Kidney (tissue), 22 donors: ENCODE measurements at regions of chr13 and their contacts with region 1.

Region 1: DNA sequence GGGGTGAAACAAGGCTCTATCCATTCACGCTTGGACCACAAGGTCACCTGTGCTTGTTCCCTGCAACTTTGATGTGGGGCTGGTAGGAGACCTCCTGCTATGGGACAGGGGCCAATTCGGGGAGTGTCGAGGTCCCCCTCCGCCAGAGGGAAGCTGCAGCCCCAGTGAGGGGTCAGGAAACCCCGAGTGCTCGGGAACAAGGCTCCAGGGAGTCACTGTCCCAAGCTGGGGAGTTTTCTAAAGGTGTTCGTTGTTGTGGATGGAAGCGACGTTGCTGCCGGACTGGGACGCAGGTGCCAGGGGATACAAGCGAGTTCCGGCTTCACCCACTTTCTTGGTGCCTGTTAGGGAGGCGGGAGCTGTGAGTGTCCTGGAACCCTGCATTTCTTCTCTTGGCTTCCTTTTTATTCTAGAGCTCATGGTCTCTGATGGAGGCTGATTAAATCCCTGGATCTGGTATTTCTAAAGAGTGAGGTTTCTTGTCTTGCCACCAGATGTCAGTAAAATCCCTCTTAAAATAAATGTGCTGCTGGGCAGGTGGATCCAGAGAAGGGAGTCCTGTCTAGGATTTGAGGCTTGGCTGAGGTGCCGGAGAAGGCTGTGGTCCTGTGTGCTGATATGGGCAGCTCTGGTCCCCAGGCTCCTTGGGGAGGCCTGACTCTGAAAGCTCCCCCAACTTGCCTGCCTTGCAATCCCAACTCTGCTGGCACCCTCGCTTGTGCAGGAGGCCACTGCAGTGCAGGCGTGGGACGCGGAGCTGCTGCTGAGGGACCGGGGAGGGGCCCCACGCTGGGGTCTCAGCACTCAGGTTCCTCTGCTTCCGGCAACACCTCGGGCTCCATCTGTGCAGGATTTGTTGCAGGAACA is 153.9 kb downstream of the TEX29 start:
- DNase-seq: peak in 4 of 5 donors; percentile 53 to 88 (median 72)
- H3K4me3 ChIP-seq: no peak overlapping the region
- H3K27ac ChIP-seq: no peak overlapping the region
- H3K4me1 ChIP-seq: no peaks in the 10 kb centered on the region
- H3K27me3 ChIP-seq: no peaks in the 10 kb centered on the region
- CTCF ChIP-seq: peak; percentile 47

Region 2: DNA sequence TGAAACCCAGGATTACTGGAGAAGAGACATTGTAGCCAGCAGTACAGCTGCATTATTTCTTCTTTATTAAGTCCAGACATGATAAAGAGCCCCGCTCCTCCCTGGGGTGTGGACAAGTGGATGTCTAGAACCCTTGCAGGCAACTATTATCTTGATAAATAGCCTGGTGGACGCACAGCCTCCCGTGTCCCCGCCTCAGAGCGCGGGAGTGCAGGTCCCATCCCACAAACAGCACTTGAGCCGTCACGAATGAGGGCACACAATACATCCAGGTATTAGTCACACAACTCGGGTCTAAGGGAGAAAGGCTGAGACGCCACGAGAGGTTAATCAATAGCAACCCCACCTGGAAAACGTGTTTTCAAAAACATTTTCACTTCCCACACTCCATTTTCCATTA is 379.4 kb after region 1 on chr13:
- intact Hi-C with region 1: no loop called
- DNase-seq: peak in 4 of 5 donors; percentile 77 to 84 (median 80)
- H3K4me3 ChIP-seq: no peak overlapping the region
- H3K27ac ChIP-seq: no peak overlapping the region
- H3K4me1 ChIP-seq: no peaks in the 10 kb centered on the region
- H3K27me3 ChIP-seq: no peaks in the 10 kb centered on the region
- CTCF ChIP-seq: no peak

Region 3: DNA sequence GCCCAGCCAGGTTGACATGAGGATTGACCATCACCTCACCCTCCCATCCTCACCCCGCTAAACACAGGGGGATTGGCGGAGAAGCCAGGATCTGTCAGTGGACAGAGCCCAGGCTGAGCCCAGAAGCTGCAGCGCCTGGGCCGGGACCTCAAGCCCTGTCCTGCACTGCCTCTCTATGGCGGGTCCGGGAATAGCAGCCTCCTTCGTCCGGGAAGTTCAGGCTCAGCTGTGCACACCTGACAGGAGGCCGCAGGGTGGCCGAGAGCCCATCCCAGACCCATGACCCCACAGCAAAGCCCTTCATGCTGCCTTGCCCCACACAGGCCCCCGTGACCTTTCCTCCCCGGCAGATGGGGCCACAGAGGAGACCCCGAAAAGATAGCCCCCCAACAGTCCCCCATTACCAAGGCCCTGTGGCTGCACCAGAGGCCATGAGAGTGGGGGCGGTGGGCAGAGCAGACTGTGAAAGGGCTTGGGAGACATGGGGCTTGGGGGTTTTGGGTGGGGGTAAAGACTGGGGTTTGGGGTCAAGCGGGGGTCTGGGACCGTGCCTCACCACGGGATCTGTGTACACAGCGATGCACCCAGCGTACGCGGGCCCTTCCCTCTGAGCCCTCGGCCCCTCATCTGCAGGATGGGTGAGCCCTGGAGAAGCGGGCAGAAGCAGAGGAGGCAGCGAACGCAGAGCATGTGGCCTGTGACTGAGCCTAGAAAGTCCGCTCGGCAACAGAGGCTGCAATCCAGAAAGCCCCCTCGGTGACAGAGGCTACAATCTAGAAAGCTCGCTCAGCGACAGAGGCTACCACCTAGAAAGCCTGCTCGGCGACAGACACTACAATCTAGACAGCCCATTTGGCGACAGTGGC is 969.9 kb after region 1 on chr13:
- intact Hi-C with region 1: loop called (anchors 10 kb)
- DNase-seq: peak; percentile 75 to 88 (median 86)
- H3K4me3 ChIP-seq: no peak overlapping the region
- H3K27ac ChIP-seq: no peak overlapping the region
- H3K4me1 ChIP-seq: no peaks in the 10 kb centered on the region
- H3K27me3 ChIP-seq: peaks cover 7% of the 10 kb centered on the region
- CTCF ChIP-seq: peak; percentile 74